ENCODE measurements at regions of chr10 and their contacts with region 1.

Region 1: GRCh38 chr10:119608316-119609155 is 11.8 kb upstream of the TIAL1 start:
- DNase-seq: peak; percentile 36
- ATAC-seq: peak; percentile 98
- H3K4me3 ChIP-seq: peak overlapping the region; percentile 39 to 66 (median 53)
- H3K27ac ChIP-seq: no peak overlapping the region
- H3K4me1 ChIP-seq: peaks cover 14% of the 10 kb centered on the region
- H3K27me3 ChIP-seq: peaks cover 0 to 4% of the 10 kb centered on the region in 2 experiments; a peak in 1 of 5 replicates
- CTCF ChIP-seq: peak; percentile 88
- EP300 ChIP-seq: no peak
- POLR2A ChIP-seq: no peak
- RAD21 ChIP-seq: peak; percentile 77

Region 2: GRCh38 chr10:119502209-119502608 is 106.3 kb before region 1 on chr10:
- CTCF ChIA-PET with region 1: no interaction called
- POLR2A ChIA-PET with region 1: no interaction called
- in situ Hi-C with region 1: no loop called
- intact Hi-C with region 1: no loop called
- DNase-seq: no peak
- ATAC-seq: no peak
- H3K4me3 ChIP-seq: no peak overlapping the region; a peak in 1 of 6 replicates
- H3K27ac ChIP-seq: no peak overlapping the region
- H3K4me1 ChIP-seq: peaks cover 54% of the 10 kb centered on the region
- H3K27me3 ChIP-seq: no peaks in the 10 kb centered on the region; a peak in 1 of 5 replicates
- CTCF ChIP-seq: no peak
- EP300 ChIP-seq: no peak
- POLR2A ChIP-seq: no peak
- RAD21 ChIP-seq: no peak

Region 3: DNA sequence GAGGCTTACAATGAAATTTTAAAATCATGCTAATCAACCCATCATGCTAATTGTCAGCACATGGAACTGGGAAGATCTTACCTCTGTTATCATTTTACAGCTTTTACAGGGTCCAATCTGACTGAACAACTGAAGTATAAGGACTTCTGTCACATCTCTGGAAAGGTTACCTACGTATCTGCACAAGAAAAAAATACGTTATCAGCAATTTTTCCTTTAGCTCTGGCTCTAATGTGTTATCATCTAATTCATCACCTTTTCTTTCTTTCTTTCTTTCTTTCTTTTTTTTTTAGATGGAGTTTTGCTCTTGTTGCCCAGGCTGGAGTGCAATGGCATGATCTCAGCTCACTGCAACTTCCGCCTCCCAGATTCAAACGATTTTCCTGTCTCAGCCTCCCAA is 20.5 kb before region 1 on chr10:
- CTCF ChIA-PET with region 1: no interaction called
- POLR2A ChIA-PET with region 1: no interaction called
- in situ Hi-C with region 1: no loop called
- intact Hi-C with region 1: no loop called
- DNase-seq: no peak
- ATAC-seq: no peak
- H3K4me3 ChIP-seq: no peak overlapping the region
- H3K27ac ChIP-seq: no peak overlapping the region
- H3K4me1 ChIP-seq: peaks cover 15% of the 10 kb centered on the region
- H3K27me3 ChIP-seq: no peaks in the 10 kb centered on the region
- CTCF ChIP-seq: no peak
- EP300 ChIP-seq: no peak
- POLR2A ChIP-seq: no peak
- RAD21 ChIP-seq: no peak

Region 4: GRCh38 chr10:119643306-119644204 is 35.0 kb after region 1 on chr10:
- CTCF ChIA-PET with region 1: no interaction called
- POLR2A ChIA-PET with region 1: interaction called, 3 read pairs
- in situ Hi-C with region 1: no loop called
- intact Hi-C with region 1: loop called (anchors 2 kb)
- DNase-seq: peak; percentile 47
- ATAC-seq: peak; percentile 85
- H3K4me3 ChIP-seq: peak overlapping the region; percentile 16 to 55 (median 47); a peak in 5 of 6 replicates
- H3K27ac ChIP-seq: peak overlapping the region; percentile 60
- H3K4me1 ChIP-seq: peaks cover 72% of the 10 kb centered on the region
- H3K27me3 ChIP-seq: no peaks in the 10 kb centered on the region; a peak in 1 of 5 replicates
- CTCF ChIP-seq: peak; percentile 65
- EP300 ChIP-seq: no peak
- POLR2A ChIP-seq: peak; percentile 32; a peak in 1 of 4 replicates
- RAD21 ChIP-seq: 0 out of 2 replicates have a peak, but pooled peaks have one; percentile 29

Region 5: DNA sequence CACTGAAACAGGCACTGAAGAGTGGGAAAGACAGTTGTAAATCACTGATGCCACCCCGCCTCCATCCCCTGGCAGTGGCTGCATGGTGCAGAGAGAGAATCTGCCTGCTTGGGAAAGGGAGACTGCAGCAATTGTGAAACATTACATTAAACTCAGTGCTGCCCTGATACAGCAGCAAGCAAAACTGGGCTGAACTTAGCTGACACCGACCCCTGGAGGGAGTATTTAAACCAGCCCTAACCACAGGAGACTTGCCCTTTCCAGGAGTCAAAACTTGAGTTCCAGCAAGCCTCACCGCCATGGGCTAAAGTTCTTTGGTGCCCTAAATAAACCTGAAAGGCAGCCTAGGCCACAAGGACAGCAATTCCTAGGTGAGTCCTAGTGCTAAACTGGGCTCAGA is 739.1 kb after region 1 on chr10:
- CTCF ChIA-PET with region 1: no interaction called
- POLR2A ChIA-PET with region 1: no interaction called
- in situ Hi-C with region 1: no loop called
- intact Hi-C with region 1: loop called (anchors 5 kb)
- DNase-seq: no peak
- ATAC-seq: no peak
- H3K4me3 ChIP-seq: no peak overlapping the region
- H3K27ac ChIP-seq: no peak overlapping the region
- H3K4me1 ChIP-seq: no peaks in the 10 kb centered on the region
- H3K27me3 ChIP-seq: no peaks in the 10 kb centered on the region; a peak in 1 of 5 replicates
- CTCF ChIP-seq: no peak
- EP300 ChIP-seq: no peak
- POLR2A ChIP-seq: no peak
- RAD21 ChIP-seq: no peak